Esophagus squamous epithelium (tissue), 5 donors: ENCODE measurements at regions of chr3 and their contacts with region 1.

Region 1: DNA sequence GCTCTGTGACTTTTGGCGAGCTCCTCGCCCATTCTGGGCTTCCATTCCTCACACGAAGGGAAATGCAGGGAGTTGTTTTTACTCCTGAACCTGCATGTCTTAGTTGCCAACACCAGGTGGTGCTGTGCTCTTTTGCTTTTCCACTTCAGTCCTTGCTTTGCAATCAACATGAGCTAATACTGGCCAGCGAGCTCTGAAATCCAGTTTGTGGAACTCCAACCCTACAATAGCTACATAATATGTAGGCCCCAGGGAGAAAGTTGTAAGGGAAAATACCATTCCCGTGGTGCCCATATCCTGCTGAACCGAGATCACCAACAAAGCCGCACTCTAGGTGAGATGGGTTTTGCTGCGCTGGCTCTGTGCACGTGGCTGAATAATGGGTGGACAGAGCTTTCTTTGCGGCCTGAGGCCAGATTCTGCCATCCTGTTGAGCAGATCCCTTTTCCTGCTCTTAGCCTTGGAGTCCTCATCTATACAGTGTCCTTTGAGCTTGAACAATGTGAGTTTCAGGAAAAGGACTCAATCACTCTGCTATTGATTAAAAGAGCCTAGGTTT is 25.0 kb downstream of the LSM3 start:
- DNase-seq: no peak
- H3K4me3 ChIP-seq: no peak overlapping the region
- H3K27ac ChIP-seq: peak overlapping the region in 3 of 4 donors; percentile 2 to 67 (median 66)
- H3K4me1 ChIP-seq: peaks cover 20 to 65% (median 41%) of the 10 kb centered on the region in 3 donors
- H3K27me3 ChIP-seq: no peaks in the 10 kb centered on the region
- CTCF ChIP-seq: peak; percentile 71 to 93 (median 88)
- POLR2A ChIP-seq: no peak

Region 2: GRCh38 chr3:14261229-14261628 is 57.6 kb after region 1 on chr3:
- intact Hi-C with region 1: loop called (anchors 10 kb)
- DNase-seq: no peak
- H3K4me3 ChIP-seq: no peak overlapping the region
- H3K27ac ChIP-seq: no peak overlapping the region
- H3K4me1 ChIP-seq: peaks cover 3 to 28% (median 12%) of the 10 kb centered on the region in 3 donors
- H3K27me3 ChIP-seq: peaks cover 0 to 29% (median 0%) of the 10 kb centered on the region in 4 donors
- CTCF ChIP-seq: peak; percentile 80 to 98 (median 97)
- POLR2A ChIP-seq: no peak

Region 3: GRCh38 chr3:14289590-14290461 is 86.2 kb after region 1 on chr3:
- intact Hi-C with region 1: no loop called
- DNase-seq: no peak
- H3K4me3 ChIP-seq: no peak overlapping the region
- H3K27ac ChIP-seq: no peak overlapping the region
- H3K4me1 ChIP-seq: peaks cover 0 to 19% (median 0%) of the 10 kb centered on the region in 3 donors
- H3K27me3 ChIP-seq: peaks cover 0 to 3% (median 0%) of the 10 kb centered on the region in 4 donors
- CTCF ChIP-seq: no peak
- POLR2A ChIP-seq: no peak

Region 4: GRCh38 chr3:14467814-14468620 is 264.4 kb after region 1 on chr3:
- intact Hi-C with region 1: loop called (anchors 5 kb)
- DNase-seq: no peak
- H3K4me3 ChIP-seq: no peak overlapping the region
- H3K27ac ChIP-seq: no peak overlapping the region
- H3K4me1 ChIP-seq: peaks cover 0 to 6% (median 6%) of the 10 kb centered on the region in 3 donors
- H3K27me3 ChIP-seq: no peaks in the 10 kb centered on the region
- CTCF ChIP-seq: peak; percentile 85 to 93 (median 91)
- POLR2A ChIP-seq: no peak